ENCODE measurements at regions of chr11 and their contacts with region 1.

Region 1: GRCh38 chr11:78416305-78417178 is 1.1 kb downstream of the GAB2 start:
- DNase-seq: peak; percentile 50 to 91
- H3K4me3 ChIP-seq: peak overlapping the region; percentile 56 to 72 (median 60)
- H3K27ac ChIP-seq: no peak overlapping the region
- H3K4me1 ChIP-seq: peaks cover 3 to 16% (median 5%) of the 10 kb centered on the region in 4 experiments; a peak in 6 of 7 replicates
- H3K27me3 ChIP-seq: peaks cover 0 to 13% (median 8%) of the 10 kb centered on the region in 4 experiments; a peak in 4 of 7 replicates
- CTCF ChIP-seq: peak; percentile 51 to 55 (median 55)
- EP300 ChIP-seq: no peak
- POLR2A ChIP-seq: no peak; a peak in 2 of 3 replicates
- RAD21 ChIP-seq: peak; percentile 37 to 59; a peak in 3 of 4 replicates

Region 2: GRCh38 chr11:78432058-78432515 is 15.5 kb after region 1 on chr11:
- CTCF ChIA-PET with region 1: interaction called, 87 read pairs
- POLR2A ChIA-PET with region 1: interaction called, 33 read pairs
- DNase-seq: no peak
- H3K4me3 ChIP-seq: no peak overlapping the region
- H3K27ac ChIP-seq: no peak overlapping the region
- H3K4me1 ChIP-seq: peaks cover 0 to 3% (median 1%) of the 10 kb centered on the region in 4 experiments; a peak in 2 of 7 replicates
- H3K27me3 ChIP-seq: no peaks in the 10 kb centered on the region
- CTCF ChIP-seq: peak; percentile 30 to 45 (median 33); a peak in 3 of 4 replicates
- EP300 ChIP-seq: 0 out of 3 replicates have a peak, but pooled peaks of 1 of the 2 experiments have one; percentile 4
- POLR2A ChIP-seq: no peak
- RAD21 ChIP-seq: peak; percentile 31 to 42; a peak in 2 of 4 replicates

Region 3: GRCh38 chr11:78449866-78450265 is 33.3 kb after region 1 on chr11:
- CTCF ChIA-PET with region 1: no interaction called
- POLR2A ChIA-PET with region 1: no interaction called
- DNase-seq: no peak
- H3K4me3 ChIP-seq: no peak overlapping the region
- H3K27ac ChIP-seq: no peak overlapping the region
- H3K4me1 ChIP-seq: no peaks in the 10 kb centered on the region
- H3K27me3 ChIP-seq: peaks cover 0 to 1% (median 0%) of the 10 kb centered on the region in 4 experiments; a peak in 1 of 7 replicates
- CTCF ChIP-seq: no peak
- EP300 ChIP-seq: no peak
- POLR2A ChIP-seq: no peak
- RAD21 ChIP-seq: no peak

Measured in H1 (cell line).